Activated CD8-positive, alpha-beta T cell treated with anti-CD3 and anti-CD28 coated beads for 36 hours (primary cell): ENCODE measurements at regions of chr11 and their contacts with region 1.

Region 1: GRCh38 chr11:123103326-123103980 is 41.5 kb upstream of the HSPA8 start:
- DNase-seq: peak; percentile 40
- ATAC-seq: peak; percentile 56
- H3K4me3 Mint-ChIP-seq: no peak overlapping the region
- H3K27ac Mint-ChIP-seq: no peak overlapping the region
- H3K4me1 Mint-ChIP-seq: peaks cover 18% of the 10 kb centered on the region
- H3K27me3 Mint-ChIP-seq: no peaks in the 10 kb centered on the region
- CTCF ChIP-seq: peak; percentile 64

Region 2: GRCh38 chr11:123062158-123062891 is 41.1 kb before region 1 on chr11:
- CTCF ChIA-PET with region 1: interaction called, 7 read pairs
- POLR2A ChIA-PET with region 1: interaction called, 16 read pairs
- intact Hi-C with region 1: no loop called
- DNase-seq: peak; percentile 100
- ATAC-seq: peak; percentile 86
- H3K4me3 Mint-ChIP-seq: peak overlapping the region; percentile 97
- H3K27ac Mint-ChIP-seq: peak overlapping the region; percentile 99
- H3K4me1 Mint-ChIP-seq: peaks cover 32% of the 10 kb centered on the region
- H3K27me3 Mint-ChIP-seq: no peaks in the 10 kb centered on the region
- CTCF ChIP-seq: no peak

Region 3: GRCh38 chr11:123083623-123084029 is 19.8 kb before region 1 on chr11:
- CTCF ChIA-PET with region 1: interaction called, 15 read pairs
- POLR2A ChIA-PET with region 1: interaction called, 5 read pairs
- intact Hi-C with region 1: no loop called
- DNase-seq: peak; percentile 71
- ATAC-seq: peak; percentile 37
- H3K4me3 Mint-ChIP-seq: no peak overlapping the region
- H3K27ac Mint-ChIP-seq: peak overlapping the region; percentile 74
- H3K4me1 Mint-ChIP-seq: peaks cover 35% of the 10 kb centered on the region
- H3K27me3 Mint-ChIP-seq: no peaks in the 10 kb centered on the region
- CTCF ChIP-seq: no peak

Region 4: GRCh38 chr11:123261345-123262106 is 158.1 kb after region 1 on chr11:
- CTCF ChIA-PET with region 1: interaction called, 14 read pairs
- POLR2A ChIA-PET with region 1: no interaction called
- intact Hi-C with region 1: no loop called
- DNase-seq: peak; percentile 88
- ATAC-seq: peak; percentile 93
- H3K4me3 Mint-ChIP-seq: no peak overlapping the region
- H3K27ac Mint-ChIP-seq: no peak overlapping the region
- H3K4me1 Mint-ChIP-seq: peaks cover 6% of the 10 kb centered on the region
- H3K27me3 Mint-ChIP-seq: peaks cover 25% of the 10 kb centered on the region
- CTCF ChIP-seq: peak; percentile 88